ENCODE measurements at regions of chr5 and their contacts with region 1.

Region 1: DNA sequence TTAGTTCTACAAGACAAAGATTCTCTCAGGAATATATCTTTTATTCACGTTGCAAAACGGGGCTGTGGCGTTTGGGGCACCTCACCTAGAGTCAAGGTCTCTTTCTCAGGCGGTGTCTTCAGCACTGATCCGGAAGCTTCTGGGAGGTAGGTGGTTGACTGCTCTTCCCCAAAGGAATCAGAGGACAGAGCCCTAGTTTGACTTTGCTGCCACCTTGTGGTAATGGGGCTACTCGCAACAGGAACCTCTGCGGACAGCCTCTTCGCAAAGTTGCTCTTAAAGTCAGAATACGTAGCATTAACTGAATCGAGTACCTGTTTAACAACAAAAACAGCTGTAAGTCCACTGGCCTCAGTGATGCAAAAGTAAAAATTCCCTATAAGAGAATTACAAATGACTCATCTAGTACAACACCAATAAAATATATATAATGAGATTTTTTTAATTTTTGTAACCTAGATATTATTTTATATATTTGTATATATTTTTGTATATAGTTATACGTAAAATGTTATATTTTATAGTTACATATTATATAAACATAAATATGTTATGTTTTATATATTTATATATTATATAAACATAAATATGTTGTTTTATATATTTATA is 13.3 kb upstream of the GPX8 start:
- DNase-seq: peak; percentile 74 to 91 (median 83)
- H3K4me3 ChIP-seq: no peak overlapping the region
- H3K27ac ChIP-seq: no peak overlapping the region
- H3K4me1 ChIP-seq: peaks cover 0 to 4% of the 10 kb centered on the region in 2 donors
- H3K27me3 ChIP-seq: peaks cover 3% of the 10 kb centered on the region
- CTCF ChIP-seq: peak; percentile 80 to 93 (median 84)
- POLR2A ChIP-seq: no peak

Region 2: GRCh38 chr5:54905943-54906537 is 240.6 kb before region 1 on chr5:
- intact Hi-C with region 1: loop called (anchors 5 kb)
- DNase-seq: peak; percentile 39 to 87 (median 68)
- H3K4me3 ChIP-seq: no peak overlapping the region
- H3K27ac ChIP-seq: no peak overlapping the region
- H3K4me1 ChIP-seq: no peaks in the 10 kb centered on the region
- H3K27me3 ChIP-seq: peaks cover 3% of the 10 kb centered on the region
- CTCF ChIP-seq: peak; percentile 45 to 71 (median 60)
- POLR2A ChIP-seq: no peak

Region 3: GRCh38 chr5:54944364-54944763 is 202.3 kb before region 1 on chr5:
- intact Hi-C with region 1: loop called in 1 of 2 experiments (anchors 10 kb)
- DNase-seq: peak in 2 of 7 donors; percentile 23 to 48
- H3K4me3 ChIP-seq: no peak overlapping the region
- H3K27ac ChIP-seq: no peak overlapping the region
- H3K4me1 ChIP-seq: no peaks in the 10 kb centered on the region
- H3K27me3 ChIP-seq: no peaks in the 10 kb centered on the region
- CTCF ChIP-seq: peak; percentile 41 to 67 (median 52)
- POLR2A ChIP-seq: no peak